CD4-positive, alpha-beta T cell (primary cell): ENCODE measurements at regions of chr10 and their contacts with region 1.

Region 1: DNA sequence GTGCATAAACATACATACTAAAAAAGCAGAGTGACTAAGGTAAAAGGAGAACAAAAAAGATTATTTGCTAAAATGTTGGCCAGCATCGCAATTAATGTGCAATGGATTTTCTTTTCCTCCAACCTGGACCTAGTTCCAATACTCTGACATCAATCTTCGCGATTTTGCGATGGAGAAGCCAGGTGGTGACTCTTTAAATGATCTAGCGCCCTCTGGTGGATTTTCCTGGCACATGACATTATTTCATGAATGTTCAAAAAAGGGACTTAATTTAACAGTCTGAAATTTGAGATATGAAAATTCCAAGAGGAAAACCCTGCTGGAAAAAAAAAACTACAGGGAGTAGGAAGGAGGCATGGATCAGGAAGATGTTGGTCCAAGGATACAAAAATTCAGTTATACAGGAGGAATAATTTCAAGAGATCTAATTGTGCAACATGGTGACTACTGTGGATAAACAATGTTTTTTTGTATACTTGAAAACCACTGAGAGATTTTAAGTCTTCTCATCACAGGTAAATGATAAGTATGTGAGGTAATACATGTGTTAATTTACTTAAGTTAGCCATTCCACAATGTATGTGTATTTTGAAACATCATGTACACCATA is 4.3 kb upstream of the KCNMA1 start:
- DNase-seq: peak in 11 of 14 experiments; percentile 2 to 67 (median 22)
- ATAC-seq: no peak
- H3K4me3 ChIP-seq: no peak overlapping the region
- H3K4me3 Mint-ChIP-seq: no peak overlapping the region
- H3K27ac ChIP-seq: no peak overlapping the region
- H3K27ac Mint-ChIP-seq: no peak overlapping the region
- H3K4me1 ChIP-seq: peaks cover 2% of the 10 kb centered on the region
- H3K4me1 Mint-ChIP-seq: no peaks in the 10 kb centered on the region
- H3K27me3 ChIP-seq: peaks cover 16 to 36% of the 10 kb centered on the region in 2 experiments
- H3K27me3 Mint-ChIP-seq: peaks cover 62% of the 10 kb centered on the region
- CTCF ChIP-seq: peak; percentile 78

Region 2: DNA sequence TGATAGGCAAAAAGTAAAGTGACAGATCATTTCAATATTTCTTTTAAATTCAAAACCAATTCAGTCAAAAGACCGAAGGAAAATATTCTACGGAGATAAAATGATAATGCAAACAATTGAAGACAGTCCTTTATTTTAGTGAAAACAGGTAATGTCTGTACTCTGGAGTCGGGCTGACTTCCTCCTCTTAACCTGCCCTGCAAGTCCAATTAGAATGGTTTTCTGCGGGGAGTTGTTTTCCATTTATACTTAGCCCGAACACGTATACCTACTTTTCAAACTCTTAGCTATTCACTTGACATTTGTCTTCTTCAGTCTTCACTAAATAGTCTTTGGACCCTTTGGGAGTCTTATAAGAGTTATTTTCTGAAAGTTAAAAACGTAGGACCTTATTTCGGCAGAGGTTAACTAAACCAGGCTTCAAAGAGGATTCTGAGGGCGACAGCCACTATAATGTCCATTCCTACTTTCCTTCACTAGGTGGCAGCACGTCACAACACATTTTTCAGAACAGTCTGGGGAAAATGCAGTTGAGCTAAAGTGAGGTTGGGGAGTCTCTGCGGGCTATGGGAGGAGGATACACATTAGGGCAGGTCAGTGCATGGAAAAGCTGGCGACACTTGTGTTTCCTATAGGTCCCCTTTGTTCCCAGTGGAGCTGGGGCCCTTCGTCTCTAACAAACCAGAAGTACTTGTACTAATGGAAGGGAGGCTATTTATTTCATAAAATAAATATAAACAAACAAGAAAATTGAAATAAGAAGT is 476.3 kb before region 1 on chr10:
- CTCF ChIA-PET with region 1: no interaction called
- POLR2A ChIA-PET with region 1: no interaction called
- intact Hi-C with region 1: loop called in 1 of 2 experiments (anchors 2 kb)
- DNase-seq: peak in 9 of 14 experiments; percentile 1 to 56 (median 6)
- ATAC-seq: peak; percentile 60
- H3K4me3 ChIP-seq: no peak overlapping the region
- H3K4me3 Mint-ChIP-seq: peak overlapping the region; percentile 16
- H3K27ac ChIP-seq: no peak overlapping the region
- H3K27ac Mint-ChIP-seq: no peak overlapping the region
- H3K4me1 ChIP-seq: peaks cover 2% of the 10 kb centered on the region
- H3K4me1 Mint-ChIP-seq: no peaks in the 10 kb centered on the region
- H3K27me3 ChIP-seq: peaks cover 6 to 23% of the 10 kb centered on the region in 2 experiments
- H3K27me3 Mint-ChIP-seq: peaks cover 44% of the 10 kb centered on the region
- CTCF ChIP-seq: peak; percentile 76

Region 3: DNA sequence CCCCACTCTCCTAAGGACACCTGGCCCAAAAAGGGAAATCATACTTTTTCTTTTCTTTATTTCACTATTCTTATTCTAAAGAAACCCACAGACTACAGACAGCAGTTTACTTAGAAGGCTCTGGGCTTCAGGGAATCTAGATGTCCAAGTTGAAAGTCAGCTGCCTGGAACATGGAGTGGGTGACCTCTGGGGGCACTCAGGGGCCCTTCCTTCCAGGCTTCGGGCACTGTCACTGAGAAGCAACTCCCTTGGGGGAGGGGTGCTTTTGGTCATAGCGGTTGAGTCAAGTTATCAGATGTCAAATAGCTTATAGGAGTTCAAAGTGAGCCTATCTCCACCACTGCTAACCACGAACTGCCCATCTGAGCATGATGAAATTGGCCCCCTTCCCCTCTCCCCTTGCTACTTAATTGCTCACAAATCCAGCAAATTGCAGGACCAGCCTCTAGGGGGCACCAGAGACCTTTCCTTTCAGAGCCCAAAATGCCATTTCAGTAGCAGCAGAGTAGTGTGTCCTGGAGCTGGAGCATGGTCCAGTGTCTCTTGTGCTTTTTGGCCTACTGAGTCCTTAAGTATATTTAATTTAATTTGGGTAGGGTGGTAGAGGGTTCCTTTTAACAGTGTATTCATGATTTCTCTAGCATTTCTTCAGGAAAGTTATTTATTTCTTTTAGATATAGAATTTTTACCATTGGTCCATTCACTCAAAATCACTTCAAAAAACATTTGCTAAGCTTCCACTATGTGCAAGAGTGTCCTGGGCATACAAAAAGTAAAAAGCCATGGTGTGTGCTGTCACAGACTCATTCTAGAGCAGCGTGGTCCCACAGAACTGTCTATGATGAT is 468.1 kb before region 1 on chr10:
- CTCF ChIA-PET with region 1: no interaction called
- POLR2A ChIA-PET with region 1: no interaction called
- intact Hi-C with region 1: loop called (anchors 1 kb)
- DNase-seq: peak; percentile 19 to 76 (median 44)
- ATAC-seq: no peak
- H3K4me3 ChIP-seq: no peak overlapping the region
- H3K4me3 Mint-ChIP-seq: no peak overlapping the region
- H3K27ac ChIP-seq: no peak overlapping the region
- H3K27ac Mint-ChIP-seq: no peak overlapping the region
- H3K4me1 ChIP-seq: no peaks in the 10 kb centered on the region
- H3K4me1 Mint-ChIP-seq: no peaks in the 10 kb centered on the region
- H3K27me3 ChIP-seq: no peaks in the 10 kb centered on the region
- H3K27me3 Mint-ChIP-seq: peaks cover 27% of the 10 kb centered on the region
- CTCF ChIP-seq: peak; percentile 88